Breast epithelium (tissue), 4 donors: ENCODE measurements at regions of chr3 and their contacts with region 1.

Region 1: DNA sequence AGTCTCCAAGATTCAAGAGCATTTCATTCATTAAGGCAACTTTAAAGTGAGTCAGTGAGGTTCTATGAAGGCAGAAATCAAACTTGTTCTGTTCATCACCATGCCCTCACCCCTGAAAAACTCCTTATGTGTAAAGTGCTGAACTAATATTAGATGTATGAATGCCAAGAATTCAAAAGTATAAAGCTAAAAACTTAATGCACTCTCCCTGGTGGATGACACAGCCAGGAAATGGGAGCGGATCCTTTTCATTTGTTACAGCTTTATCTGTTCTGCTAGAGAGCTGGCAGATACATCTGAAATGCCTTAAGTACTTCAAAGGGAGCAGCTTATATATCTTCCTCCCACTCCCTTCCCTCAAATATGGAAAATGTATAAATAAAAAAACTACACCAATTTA is 8.2 kb downstream of the TXNRD3 start:
- DNase-seq: no peak
- H3K4me3 ChIP-seq: no peak overlapping the region
- H3K27ac ChIP-seq: no peak overlapping the region
- H3K4me1 ChIP-seq: no peaks in the 10 kb centered on the region
- H3K27me3 ChIP-seq: no peaks in the 10 kb centered on the region
- CTCF ChIP-seq: no peak
- POLR2A ChIP-seq: no peak

Region 2: GRCh38 chr3:126180477-126181397 is 465.9 kb before region 1 on chr3 and contains the start of gene ALDH1L1:
- intact Hi-C with region 1: loop called (anchors 5 kb)
- DNase-seq: peak in 1 of 2 donors; percentile 69
- H3K4me3 ChIP-seq: peak within 1 kb of the TSS; percentile 37 to 72 (median 57)
- H3K27ac ChIP-seq: peak within 1 kb of the TSS; percentile 59 to 74
- H3K4me1 ChIP-seq: no peaks in the 10 kb centered on the region
- H3K27me3 ChIP-seq: no peaks in the 10 kb centered on the region
- CTCF ChIP-seq: no peak
- POLR2A ChIP-seq: no peak
- total RNA-seq, gene ALDH1L1: 10.8 to 88.3 (median 29.0) TPM